ENCODE measurements at regions of chr3 and their contacts with region 1.

Region 1: DNA sequence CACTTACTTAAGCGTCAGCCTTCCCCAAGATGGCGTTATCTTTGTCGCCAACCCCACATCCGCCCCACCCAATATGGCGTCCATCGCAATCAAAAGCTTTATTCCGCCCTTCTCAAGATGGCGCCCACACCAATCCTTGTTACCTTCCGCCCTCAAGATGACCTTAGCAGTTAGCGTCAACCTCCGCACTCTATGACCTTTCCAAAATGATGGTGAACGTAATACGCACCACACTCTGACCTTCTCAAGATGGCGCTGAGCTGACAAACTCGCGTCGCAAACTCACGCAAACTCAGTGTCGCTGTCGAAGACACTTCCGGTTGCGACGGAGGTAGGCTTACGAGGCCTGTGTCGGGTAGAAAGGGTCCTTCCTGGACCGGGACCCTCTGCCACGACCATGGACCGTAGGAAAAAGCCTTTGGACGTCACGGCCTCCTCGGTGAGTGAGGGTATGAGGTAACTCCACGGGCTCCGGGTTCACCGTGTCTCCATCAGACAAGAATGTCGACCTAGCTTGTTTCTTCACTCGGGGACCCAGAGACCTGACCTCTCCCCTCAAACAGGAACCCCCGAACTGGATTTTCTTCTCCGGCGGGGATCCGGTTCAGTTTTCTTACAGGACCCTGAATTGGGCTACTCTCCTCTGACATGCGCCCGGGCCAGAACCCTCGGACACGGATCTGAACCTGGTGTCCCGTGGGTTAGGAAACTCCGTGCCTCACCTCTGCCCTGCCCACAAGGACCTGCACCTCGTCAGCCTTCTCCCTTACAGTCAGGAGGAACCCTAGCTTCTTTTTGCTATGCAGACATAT is at the start of gene CCDC174:
- DNase-seq: peak; percentile 95 to 96
- ATAC-seq: peak; percentile 100
- H3K4me3 ChIP-seq: peak within 1 kb of the TSS; percentile 72 to 91
- H3K27ac ChIP-seq: peak within 1 kb of the TSS in 1 of 2 donors; percentile 85
- H3K4me1 ChIP-seq: peaks cover 0 to 4% of the 10 kb centered on the region in 2 donors
- H3K27me3 ChIP-seq: no peaks in the 10 kb centered on the region
- total RNA-seq, gene CCDC174: 19.3 to 25.2 TPM

Region 2: DNA sequence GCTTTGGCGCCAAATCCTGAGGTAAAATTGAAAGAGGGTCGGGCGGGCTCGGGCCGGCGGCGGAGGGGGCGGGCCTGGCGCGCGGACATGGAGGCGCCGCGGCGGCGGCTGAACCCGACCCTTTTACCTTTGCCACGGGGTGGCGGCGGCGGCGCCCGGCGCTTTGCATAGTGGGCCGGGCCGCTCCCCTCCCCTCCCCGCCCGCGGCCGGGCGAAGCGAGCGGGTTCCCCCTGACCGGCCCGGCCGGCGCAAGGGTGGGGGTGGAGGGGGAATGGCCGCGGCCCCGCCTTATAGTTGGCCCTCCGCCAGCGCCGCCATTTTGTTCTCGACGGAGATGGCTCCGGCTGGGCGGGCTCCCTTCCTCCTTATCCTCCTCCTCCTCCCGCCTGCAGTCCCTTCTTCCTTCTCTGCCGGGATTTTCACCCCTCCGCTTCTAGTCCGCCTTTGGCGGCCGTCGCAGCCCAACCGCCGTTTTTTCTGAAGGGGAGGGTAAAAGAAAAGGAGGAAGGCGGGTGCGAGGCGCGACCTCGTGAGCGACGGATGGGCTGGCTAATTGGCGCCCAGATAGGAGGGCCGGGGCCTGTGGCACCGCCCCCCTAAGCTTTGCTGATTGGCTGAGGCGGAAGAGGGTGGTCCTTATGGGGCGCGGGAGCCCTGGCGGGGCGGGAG is 296.4 kb after region 1 on chr3:
- intact Hi-C with region 1: loop called in 1 of 2 experiments (anchors 1 kb)
- DNase-seq: peak; percentile 98 to 99
- ATAC-seq: peak; percentile 99
- H3K4me3 ChIP-seq: peak overlapping the region; percentile 93 to 97
- H3K27ac ChIP-seq: peak overlapping the region; percentile 85 to 99
- H3K4me1 ChIP-seq: peaks cover 0 to 9% of the 10 kb centered on the region in 2 donors
- H3K27me3 ChIP-seq: no peaks in the 10 kb centered on the region

Measured in aorta (tissue), 5 donors.